Prostate gland (tissue), 2 donors: ENCODE measurements at regions of chr3 and their contacts with region 1.

Region 1: GRCh38 chr3:160754855-160755747 is 930 bp upstream of the PPM1L start:
- DNase-seq: peak; percentile 94
- H3K4me3 ChIP-seq: peak overlapping the region; percentile 68 to 76
- H3K27ac ChIP-seq: peak overlapping the region; percentile 88 to 92
- H3K4me1 ChIP-seq: peaks cover 6% of the 10 kb centered on the region
- H3K27me3 ChIP-seq: no peaks in the 10 kb centered on the region
- CTCF ChIP-seq: peak in 1 of 4 experiments; percentile 15
- POLR2A ChIP-seq: peak; percentile 89

Region 2: DNA sequence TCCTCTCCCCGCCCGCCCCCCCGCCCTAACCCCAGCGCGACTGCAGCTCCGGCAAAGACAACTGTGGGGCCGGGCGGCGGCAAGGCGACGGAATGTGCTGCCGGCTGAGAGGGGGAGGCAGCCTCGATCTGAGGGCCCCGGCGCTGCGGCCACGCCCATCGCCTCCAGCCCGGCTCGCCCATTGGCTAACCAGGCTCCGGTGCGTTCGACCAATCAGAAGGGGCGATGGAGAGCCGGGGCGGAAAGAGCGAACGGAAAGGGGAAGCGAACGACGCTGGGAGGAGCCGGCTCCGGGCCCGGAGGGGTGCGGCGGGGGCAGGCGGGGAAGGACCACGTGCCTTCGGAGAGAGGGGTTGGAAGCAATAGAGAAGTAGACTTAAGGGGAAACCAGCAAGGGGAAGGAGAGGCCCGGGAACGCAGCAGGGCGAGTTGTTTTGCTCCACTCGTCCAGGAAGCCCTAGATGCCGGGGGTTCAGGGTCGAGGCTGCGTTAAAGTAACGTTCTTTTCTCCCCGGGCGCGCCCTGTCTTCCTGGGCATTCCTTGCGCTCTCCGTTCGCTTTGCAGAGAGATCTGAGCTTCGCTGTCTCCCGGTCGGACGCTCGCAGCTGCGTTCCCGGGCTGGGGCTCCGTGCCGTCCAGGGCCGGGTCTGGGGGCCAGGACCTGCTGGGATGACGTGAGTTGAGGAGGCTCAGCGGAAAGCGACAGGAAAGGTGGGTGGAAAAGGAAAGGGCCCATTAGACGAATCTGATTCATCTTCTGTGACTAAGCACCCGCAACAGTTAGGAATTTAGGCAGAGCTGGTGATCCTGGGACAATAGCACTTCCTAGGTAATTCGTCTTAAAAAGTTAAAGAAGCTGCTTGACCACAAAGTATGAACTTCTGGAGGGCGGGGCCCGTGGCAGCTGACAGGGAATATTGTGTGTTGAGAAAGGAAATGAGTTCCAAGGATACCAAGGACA is 189.4 kb before region 1 on chr3 and contains the start of gene KPNA4:
- intact Hi-C with region 1: loop called (anchors 10 kb)
- DNase-seq: peak; percentile 97
- H3K4me3 ChIP-seq: peak within 1 kb of the TSS; percentile 60 to 67
- H3K27ac ChIP-seq: peak within 1 kb of the TSS; percentile 92 to 97
- H3K4me1 ChIP-seq: no peaks in the 10 kb centered on the region
- H3K27me3 ChIP-seq: no peaks in the 10 kb centered on the region
- CTCF ChIP-seq: no peak
- POLR2A ChIP-seq: peak; percentile 67
- total RNA-seq, gene KPNA4: 19.5 to 29.2 TPM

Region 3: GRCh38 chr3:160601288-160601687 is 153.8 kb before region 1 on chr3:
- intact Hi-C with region 1: no loop called
- DNase-seq: no peak
- H3K4me3 ChIP-seq: no peak overlapping the region
- H3K27ac ChIP-seq: no peak overlapping the region
- H3K4me1 ChIP-seq: no peaks in the 10 kb centered on the region
- H3K27me3 ChIP-seq: no peaks in the 10 kb centered on the region
- CTCF ChIP-seq: no peak
- POLR2A ChIP-seq: no peak

Region 4: GRCh38 chr3:160707187-160707794 is 47.8 kb before region 1 on chr3:
- intact Hi-C with region 1: loop called (anchors 5 kb)
- DNase-seq: peak; percentile 43
- H3K4me3 ChIP-seq: no peak overlapping the region
- H3K27ac ChIP-seq: no peak overlapping the region
- H3K4me1 ChIP-seq: no peaks in the 10 kb centered on the region
- H3K27me3 ChIP-seq: no peaks in the 10 kb centered on the region
- CTCF ChIP-seq: peak in 3 of 4 experiments; percentile 60 to 74 (median 68)
- POLR2A ChIP-seq: no peak

Region 5: DNA sequence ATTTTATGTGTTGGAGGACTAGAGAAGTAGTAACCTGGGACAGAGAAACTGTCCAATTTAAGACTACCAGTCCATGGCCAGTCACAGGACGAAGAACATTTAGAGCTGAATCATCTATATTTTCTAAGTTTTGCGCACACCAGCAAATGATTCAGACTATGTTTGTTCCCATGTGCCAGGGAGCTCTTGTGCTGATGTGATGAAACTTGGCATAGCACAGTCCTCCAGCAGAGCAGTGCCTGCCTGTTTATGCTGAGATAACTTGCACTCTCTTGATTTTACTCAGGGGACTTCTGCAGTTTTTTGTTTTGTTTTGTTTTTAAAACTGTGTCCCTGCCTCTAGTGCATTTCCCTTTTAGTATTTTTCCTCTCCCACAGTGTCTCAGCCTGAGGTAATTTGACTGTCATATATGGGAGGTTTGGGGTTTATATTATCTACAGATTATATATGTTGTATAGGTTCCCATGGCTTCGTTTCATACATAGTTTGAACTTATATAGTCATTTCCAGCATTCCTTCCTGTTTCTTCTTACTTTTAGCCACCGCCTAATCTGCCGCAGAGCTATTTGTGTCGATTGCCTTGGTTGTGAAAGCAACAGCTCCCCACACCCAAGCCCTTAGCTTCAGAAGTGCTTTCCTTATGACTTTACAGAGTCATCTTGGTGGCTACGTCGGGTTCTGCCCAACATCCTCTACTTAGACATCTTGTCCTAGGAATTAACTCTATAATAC is 46.5 kb after region 1 on chr3:
- intact Hi-C with region 1: loop called (anchors 5 kb)
- DNase-seq: no peak
- H3K4me3 ChIP-seq: no peak overlapping the region
- H3K27ac ChIP-seq: no peak overlapping the region
- H3K4me1 ChIP-seq: no peaks in the 10 kb centered on the region
- H3K27me3 ChIP-seq: no peaks in the 10 kb centered on the region
- CTCF ChIP-seq: no peak
- POLR2A ChIP-seq: no peak

Region 6: DNA sequence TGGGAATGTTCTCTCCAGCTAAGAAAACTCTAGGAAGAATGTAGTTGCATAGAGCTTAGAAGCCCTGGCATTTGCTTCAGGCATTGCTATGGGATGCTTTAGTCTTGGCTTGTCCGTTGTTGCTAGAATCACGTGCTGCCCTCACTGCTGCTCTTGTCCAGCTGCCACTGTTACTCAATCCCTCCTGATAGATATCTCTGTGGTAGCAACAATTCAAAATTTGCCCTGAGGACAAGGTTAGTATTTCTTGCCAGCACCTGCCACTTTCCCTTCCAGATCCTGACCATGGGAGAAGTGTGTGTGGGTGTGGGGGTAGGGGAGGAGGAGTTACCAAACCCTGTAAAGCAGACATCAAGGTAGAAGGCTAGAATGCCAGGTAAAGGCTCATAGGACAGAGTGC is 114.7 kb after region 1 on chr3:
- intact Hi-C with region 1: loop called (anchors 5 kb)
- DNase-seq: peak; percentile 56
- H3K4me3 ChIP-seq: no peak overlapping the region
- H3K27ac ChIP-seq: no peak overlapping the region
- H3K4me1 ChIP-seq: no peaks in the 10 kb centered on the region
- H3K27me3 ChIP-seq: no peaks in the 10 kb centered on the region
- CTCF ChIP-seq: no peak
- POLR2A ChIP-seq: no peak

Region 7: GRCh38 chr3:160941885-160942494 is 186.9 kb after region 1 on chr3:
- intact Hi-C with region 1: loop called (anchors 5 kb)
- DNase-seq: peak; percentile 69
- H3K4me3 ChIP-seq: no peak overlapping the region
- H3K27ac ChIP-seq: no peak overlapping the region
- H3K4me1 ChIP-seq: no peaks in the 10 kb centered on the region
- H3K27me3 ChIP-seq: no peaks in the 10 kb centered on the region
- CTCF ChIP-seq: peak; percentile 69 to 91 (median 84)
- POLR2A ChIP-seq: no peak